Cardiac septum (tissue), 1 donor: ENCODE measurements at regions of chr14 and their contacts with region 1.

Region 1: GRCh38 chr14:66359500-66359899 is 126.7 kb upstream of the CCDC196 start:
- DNase-seq: no peak

Region 2: GRCh38 chr14:66395300-66395699 is 35.8 kb after region 1 on chr14:
- intact Hi-C with region 1: loop called (anchors 5 kb)
- DNase-seq: no peak